ENCODE measurements at regions of chr4 and their contacts with region 1.

Region 1: DNA sequence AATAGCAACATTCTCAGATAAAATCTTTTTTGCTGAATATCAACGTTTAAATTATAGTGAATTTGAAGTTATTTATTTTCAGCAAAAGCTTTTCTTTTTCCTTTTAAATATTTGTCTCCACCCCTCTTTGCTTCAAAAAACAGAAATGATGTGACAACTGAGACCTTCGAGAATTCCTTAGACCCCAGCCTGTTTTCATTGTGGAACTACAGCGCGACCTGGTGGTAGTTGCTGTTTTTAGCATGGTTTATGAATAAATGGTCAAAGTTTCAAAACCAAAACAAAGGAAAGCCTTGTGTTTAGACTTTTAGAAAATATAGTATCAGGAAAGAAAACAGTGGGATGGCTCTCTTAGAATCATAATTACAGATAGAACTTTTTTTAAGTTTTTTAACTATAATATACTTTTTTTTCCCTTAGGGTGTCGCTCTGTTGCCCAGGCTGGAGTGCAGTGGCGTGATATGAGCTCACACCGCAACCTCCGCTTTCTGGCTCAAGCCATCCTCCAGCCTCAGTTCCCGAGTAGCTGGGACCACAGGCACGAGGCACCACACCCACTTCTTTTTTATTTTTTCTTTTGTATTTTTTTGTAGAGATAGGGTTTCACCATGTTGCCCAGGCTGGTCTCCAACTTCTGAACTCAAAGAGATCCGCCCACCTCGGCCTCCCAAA is 26.8 kb upstream of the TMEM184C start:
- DNase-seq: peak; percentile 28 to 55
- ATAC-seq: peak in 6 of 8 donors; percentile 33 to 74 (median 56)
- H3K4me3 ChIP-seq: no peak overlapping the region
- H3K27ac ChIP-seq: peak overlapping the region in 1 of 10 donors; percentile 13
- H3K4me1 ChIP-seq: peaks cover 0 to 17% (median 0%) of the 10 kb centered on the region in 9 donors
- H3K27me3 ChIP-seq: peaks cover 0 to 3% (median 0%) of the 10 kb centered on the region in 7 donors
- CTCF ChIP-seq: peak; percentile 42 to 84 (median 78)

Region 2: GRCh38 chr4:147019061-147019460 is 571.3 kb before region 1 on chr4:
- intact Hi-C with region 1: loop called in 8 of 10 experiments (anchors 2 to 10 kb)
- DNase-seq: peak; percentile 49 to 63
- ATAC-seq: peak; percentile 63 to 90 (median 76)
- H3K4me3 ChIP-seq: no peak overlapping the region
- H3K27ac ChIP-seq: no peak overlapping the region
- H3K4me1 ChIP-seq: no peaks in the 10 kb centered on the region
- H3K27me3 ChIP-seq: peaks cover 0 to 17% (median 0%) of the 10 kb centered on the region in 7 donors
- CTCF ChIP-seq: peak; percentile 28 to 78 (median 66)

Region 3: DNA sequence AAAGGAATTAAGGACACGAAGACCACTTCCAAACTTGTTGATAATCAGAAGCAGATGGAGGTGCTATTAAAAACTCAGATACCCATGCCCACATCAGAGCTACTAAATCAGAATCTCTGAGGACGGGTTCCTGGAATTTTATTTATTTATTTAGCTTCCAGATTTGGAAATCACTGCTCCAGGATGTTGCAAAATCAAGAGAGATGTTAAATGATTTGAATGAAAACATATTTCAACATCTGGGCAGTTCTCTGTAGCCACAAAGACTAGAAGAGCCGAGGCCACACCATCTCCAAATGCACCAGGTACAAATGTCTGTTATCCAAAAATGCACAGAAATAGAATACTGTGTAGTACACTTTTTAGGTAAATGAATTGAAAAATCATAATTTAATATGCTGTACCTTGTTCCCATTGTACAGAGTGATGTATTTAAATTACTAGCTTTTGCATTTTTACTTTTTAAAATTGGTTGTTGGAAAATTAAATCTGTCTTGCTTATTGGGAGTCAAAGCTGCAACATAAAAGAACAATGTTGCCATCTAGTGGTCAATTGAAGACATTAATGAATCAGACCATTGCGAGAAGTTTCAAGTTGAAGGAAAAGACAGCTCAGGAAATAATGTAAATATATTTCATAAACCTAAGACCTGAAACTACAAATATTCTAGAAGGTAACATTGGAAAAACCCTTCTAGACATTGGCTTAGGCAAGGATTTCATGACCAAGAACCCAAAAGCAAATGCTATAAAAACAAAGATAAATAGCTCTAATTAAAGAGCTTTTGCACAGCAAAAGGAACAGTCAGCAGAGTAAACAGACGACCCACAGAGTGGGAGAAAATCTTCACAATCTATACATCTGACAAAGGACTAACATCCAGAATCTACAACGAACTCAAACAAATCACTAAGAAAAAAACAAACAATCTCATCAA is 493.4 kb before region 1 on chr4:
- intact Hi-C with region 1: loop called in 2 of 10 experiments (anchors 5 to 10 kb)
- DNase-seq: no peak
- ATAC-seq: peak in 3 of 8 donors; percentile 22 to 65 (median 47)
- H3K4me3 ChIP-seq: no peak overlapping the region
- H3K27ac ChIP-seq: no peak overlapping the region
- H3K4me1 ChIP-seq: peaks cover 0 to 5% (median 0%) of the 10 kb centered on the region in 9 donors
- H3K27me3 ChIP-seq: no peaks in the 10 kb centered on the region
- CTCF ChIP-seq: peak; percentile 61 to 85 (median 71)

Region 4: GRCh38 chr4:147111033-147111367 is 479.4 kb before region 1 on chr4:
- intact Hi-C with region 1: loop called in 9 of 10 experiments (anchors 1 to 10 kb)
- DNase-seq: no peak
- ATAC-seq: peak in 1 of 8 donors; percentile 55
- H3K4me3 ChIP-seq: no peak overlapping the region
- H3K27ac ChIP-seq: no peak overlapping the region
- H3K4me1 ChIP-seq: peaks cover 0 to 4% (median 0%) of the 10 kb centered on the region in 9 donors
- H3K27me3 ChIP-seq: no peaks in the 10 kb centered on the region
- CTCF ChIP-seq: peak in 7 of 9 donors; percentile 13 to 57 (median 36)

Region 5: GRCh38 chr4:147160908-147161513 is 429.4 kb before region 1 on chr4:
- intact Hi-C with region 1: loop called (anchors 2 to 10 kb)
- DNase-seq: peak in 1 of 2 donors; percentile 20
- ATAC-seq: peak in 6 of 8 donors; percentile 34 to 68 (median 60)
- H3K4me3 ChIP-seq: no peak overlapping the region
- H3K27ac ChIP-seq: no peak overlapping the region
- H3K4me1 ChIP-seq: peaks cover 0 to 18% (median 0%) of the 10 kb centered on the region in 9 donors
- H3K27me3 ChIP-seq: peaks cover 0 to 14% (median 0%) of the 10 kb centered on the region in 7 donors
- CTCF ChIP-seq: peak; percentile 56 to 84 (median 77)

Region 6: GRCh38 chr4:148258535-148258934 is 668.1 kb after region 1 on chr4:
- intact Hi-C with region 1: no loop called
- DNase-seq: peak in 1 of 2 donors; percentile 23
- ATAC-seq: peak in 7 of 8 donors; percentile 55 to 79 (median 61)
- H3K4me3 ChIP-seq: no peak overlapping the region
- H3K27ac ChIP-seq: peak overlapping the region in 1 of 10 donors; percentile 22
- H3K4me1 ChIP-seq: peaks cover 0 to 27% (median 10%) of the 10 kb centered on the region in 9 donors
- H3K27me3 ChIP-seq: no peaks in the 10 kb centered on the region
- CTCF ChIP-seq: no peak